Adrenal gland (tissue), 19 donors: ENCODE measurements at regions of chr1 and their contacts with region 1.

Region 1: GRCh38 chr1:174262349-174263241 is 103.3 kb downstream of the RABGAP1L start:
- DNase-seq: peak in 4 of 7 donors; percentile 8 to 52 (median 13)
- H3K4me3 ChIP-seq: no peak overlapping the region
- H3K27ac ChIP-seq: no peak overlapping the region
- H3K4me1 ChIP-seq: no peaks in the 10 kb centered on the region
- H3K27me3 ChIP-seq: no peaks in the 10 kb centered on the region
- CTCF ChIP-seq: peak; percentile 58 to 85 (median 72)
- POLR2A ChIP-seq: no peak

Region 2: GRCh38 chr1:174448974-174449373 is 186.4 kb after region 1 on chr1:
- intact Hi-C with region 1: no loop called
- DNase-seq: peak in 4 of 7 donors; percentile 8 to 57 (median 19)
- H3K4me3 ChIP-seq: no peak overlapping the region
- H3K27ac ChIP-seq: peak overlapping the region in 1 of 5 donors; percentile 27
- H3K4me1 ChIP-seq: peaks cover 0 to 8% of the 10 kb centered on the region in 2 donors
- H3K27me3 ChIP-seq: no peaks in the 10 kb centered on the region
- CTCF ChIP-seq: no peak
- POLR2A ChIP-seq: no peak

Region 3: DNA sequence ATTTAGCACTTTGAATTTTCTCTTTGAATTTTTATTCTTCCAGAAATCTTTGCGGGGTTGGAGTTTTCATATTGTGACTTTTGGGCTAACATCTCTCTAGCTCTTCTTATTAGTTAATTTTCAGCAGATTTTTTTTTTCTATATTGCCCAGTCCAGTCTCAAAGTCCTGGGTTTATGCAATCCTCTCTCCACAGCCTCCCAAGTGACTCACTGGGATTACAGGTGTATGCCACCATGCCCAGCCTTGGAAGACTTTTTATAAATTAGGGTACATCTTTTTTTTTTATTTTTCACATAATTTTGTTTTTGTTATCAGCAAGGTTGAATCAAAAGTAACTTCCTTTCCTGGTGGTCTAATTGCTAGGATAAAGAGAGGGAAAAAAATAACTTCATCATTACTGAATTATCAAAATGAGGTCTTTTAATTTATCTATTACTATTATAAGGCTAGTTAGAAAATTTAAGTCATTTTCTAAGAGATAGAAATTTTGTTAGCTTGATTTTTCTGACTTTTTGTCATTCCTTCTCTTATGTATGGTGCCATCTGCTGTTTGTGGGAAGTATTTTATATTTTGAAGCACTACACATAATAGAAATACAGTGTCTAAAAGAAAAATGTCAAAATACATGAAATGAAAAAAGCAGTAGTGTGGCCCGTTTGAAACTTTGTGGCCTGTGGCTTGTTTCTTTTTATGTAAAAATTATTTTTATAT is 463.7 kb after region 1 on chr1:
- intact Hi-C with region 1: loop called (anchors 5 to 10 kb)
- DNase-seq: no peak
- H3K4me3 ChIP-seq: no peak overlapping the region
- H3K27ac ChIP-seq: no peak overlapping the region
- H3K4me1 ChIP-seq: no peaks in the 10 kb centered on the region
- H3K27me3 ChIP-seq: no peaks in the 10 kb centered on the region
- CTCF ChIP-seq: peak; percentile 32 to 69 (median 52)
- POLR2A ChIP-seq: no peak

Region 4: DNA sequence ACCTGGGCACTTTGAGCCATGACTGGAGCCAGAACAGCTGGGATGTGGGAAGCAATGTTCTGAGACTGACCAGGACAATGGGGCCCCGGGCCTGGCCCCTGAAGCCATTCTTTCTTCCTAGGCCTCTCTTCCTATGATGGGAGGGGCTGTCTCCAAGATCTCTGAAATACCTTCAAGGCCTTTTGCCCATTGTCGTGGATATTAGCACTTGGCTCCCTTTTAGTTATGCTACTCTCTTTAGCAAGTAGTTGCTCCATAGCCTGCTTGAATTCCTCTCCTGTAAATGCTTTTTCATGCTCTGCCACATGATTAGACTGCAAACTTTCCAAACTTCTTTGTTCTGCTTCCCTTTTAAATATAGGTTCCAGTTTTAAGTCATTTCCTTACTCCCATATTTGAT is 474.2 kb after region 1 on chr1:
- intact Hi-C with region 1: loop called (anchors 5 to 10 kb)
- DNase-seq: no peak
- H3K4me3 ChIP-seq: no peak overlapping the region
- H3K27ac ChIP-seq: no peak overlapping the region
- H3K4me1 ChIP-seq: no peaks in the 10 kb centered on the region
- H3K27me3 ChIP-seq: no peaks in the 10 kb centered on the region
- CTCF ChIP-seq: no peak
- POLR2A ChIP-seq: no peak

Region 5: DNA sequence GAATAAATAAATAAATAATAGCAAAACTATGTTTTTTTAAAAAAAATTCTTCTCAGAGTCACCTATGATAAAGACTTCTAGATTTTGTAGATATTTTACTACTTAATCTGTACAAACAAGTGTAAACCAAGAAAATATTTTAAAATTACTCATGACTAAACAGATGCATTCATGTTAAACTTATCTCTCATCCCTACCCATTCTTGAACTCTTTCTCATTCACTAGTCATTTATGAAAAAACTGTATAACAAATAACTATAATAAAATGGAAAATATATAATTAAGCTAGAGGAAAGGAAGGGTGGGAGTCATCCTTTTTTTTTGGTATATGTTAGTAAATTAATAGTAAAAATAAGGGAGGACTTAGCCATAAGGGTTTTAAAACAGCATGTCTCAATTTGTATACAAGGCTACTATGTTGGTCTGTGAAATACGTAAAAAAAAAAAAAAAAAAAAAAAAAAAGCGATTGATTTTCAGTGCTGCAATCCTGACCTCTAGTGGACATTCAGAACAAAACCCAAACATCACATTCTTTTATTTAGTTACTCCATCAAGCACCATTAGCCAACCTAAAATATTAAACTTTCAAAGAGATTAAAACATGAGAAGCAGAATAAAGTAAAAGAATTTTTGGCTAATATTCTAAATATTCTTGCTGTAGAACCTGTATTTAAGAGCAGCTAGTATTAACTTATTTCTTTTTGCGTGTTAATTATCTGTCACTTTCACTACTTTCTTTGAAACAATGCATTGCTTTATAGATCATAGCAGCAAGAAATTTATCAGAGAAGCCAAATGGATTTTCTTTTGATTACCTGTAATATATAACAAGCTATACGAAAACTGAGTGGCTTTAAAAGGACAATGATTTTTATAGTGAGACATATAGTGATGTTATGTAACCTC is 481.3 kb after region 1 on chr1:
- intact Hi-C with region 1: loop called (anchors 5 to 10 kb)
- DNase-seq: no peak
- H3K4me3 ChIP-seq: no peak overlapping the region
- H3K27ac ChIP-seq: no peak overlapping the region
- H3K4me1 ChIP-seq: no peaks in the 10 kb centered on the region
- H3K27me3 ChIP-seq: no peaks in the 10 kb centered on the region
- CTCF ChIP-seq: peak; percentile 41 to 80 (median 62)
- POLR2A ChIP-seq: no peak